Activated CD4-positive, alpha-beta T cell treated with anti-CD3 and anti-CD28 coated beads, Interleukin-2, amount 10 ng/mL, durations not matched to agents 24 days and 14 days (primary cell): ENCODE measurements at regions of chr10 and their contacts with region 1.

Region 1: GRCh38 chr10:88791924-88792323 is 10.6 kb upstream of the LIPM start:
- DNase-seq: no peak
- H3K4me3 Mint-ChIP-seq: no peak overlapping the region
- H3K27ac Mint-ChIP-seq: no peak overlapping the region
- H3K4me1 Mint-ChIP-seq: peaks cover 24% of the 10 kb centered on the region
- H3K27me3 Mint-ChIP-seq: peaks cover 21% of the 10 kb centered on the region

Region 2: DNA sequence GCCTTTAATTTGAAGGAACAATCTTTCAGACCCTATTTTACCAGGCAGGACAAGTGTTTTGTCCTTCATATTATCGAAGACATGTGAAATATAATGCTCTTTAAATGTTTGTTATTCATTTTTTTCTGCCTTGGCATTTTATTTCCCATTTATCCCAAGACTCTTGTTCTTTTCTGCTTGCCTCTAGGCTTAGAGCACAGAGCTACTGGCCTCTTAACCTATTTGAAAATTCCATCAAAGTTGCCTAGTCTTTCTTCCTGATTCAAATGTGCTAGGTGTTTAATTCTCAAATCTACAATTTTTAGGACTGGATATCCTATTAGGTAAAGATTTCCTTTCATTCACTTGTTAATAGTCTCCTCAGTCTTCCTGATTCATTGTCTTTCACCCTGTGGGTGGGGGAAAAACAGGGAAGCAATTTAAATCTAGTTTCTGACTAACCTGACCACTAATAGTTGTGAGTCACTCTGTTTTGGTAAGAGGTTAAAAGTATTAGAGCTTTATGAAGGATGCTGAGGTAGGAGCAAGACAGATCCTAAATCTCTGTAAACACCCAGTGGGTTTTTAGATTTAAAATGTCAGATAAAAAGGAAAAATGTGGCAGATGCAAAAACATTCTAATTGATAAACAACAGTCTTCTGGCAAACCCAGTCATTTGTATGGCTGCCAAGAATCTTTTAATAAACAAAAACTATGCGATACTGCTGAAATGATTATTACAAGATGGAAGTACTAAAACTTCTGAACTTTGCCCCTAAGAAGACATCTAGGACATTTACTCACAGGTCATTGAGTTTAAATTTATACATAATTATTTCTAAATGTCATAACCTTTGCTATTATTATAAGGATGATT is 84.3 kb before region 1 on chr10:
- intact Hi-C with region 1: loop called (anchors 5 kb)
- DNase-seq: no peak
- H3K4me3 Mint-ChIP-seq: no peak overlapping the region
- H3K27ac Mint-ChIP-seq: peak overlapping the region; percentile 1
- H3K4me1 Mint-ChIP-seq: peaks cover 15% of the 10 kb centered on the region
- H3K27me3 Mint-ChIP-seq: peaks cover 28% of the 10 kb centered on the region

Region 3: DNA sequence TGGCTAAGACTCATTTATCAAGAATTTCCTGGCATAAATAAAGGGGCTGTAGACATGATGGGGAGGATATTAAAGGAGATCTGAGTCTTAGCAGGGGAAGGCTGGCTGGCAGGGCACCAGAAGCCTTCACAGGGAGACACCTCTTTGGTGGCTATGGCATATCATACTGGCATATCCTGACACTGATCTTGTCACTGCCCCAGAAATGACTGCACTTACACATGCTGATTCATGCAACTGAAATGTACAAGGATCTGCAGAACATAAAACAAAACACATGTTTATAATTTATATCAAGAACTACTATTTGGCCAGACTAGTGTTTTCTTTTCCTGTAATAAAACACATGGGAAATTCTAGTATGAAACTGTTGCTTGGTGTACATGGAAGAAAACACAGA is 37.6 kb before region 1 on chr10:
- intact Hi-C with region 1: loop called (anchors 2 kb)
- DNase-seq: no peak
- H3K4me3 Mint-ChIP-seq: no peak overlapping the region
- H3K27ac Mint-ChIP-seq: no peak overlapping the region
- H3K4me1 Mint-ChIP-seq: peaks cover 5% of the 10 kb centered on the region
- H3K27me3 Mint-ChIP-seq: peaks cover 23% of the 10 kb centered on the region

Region 4: DNA sequence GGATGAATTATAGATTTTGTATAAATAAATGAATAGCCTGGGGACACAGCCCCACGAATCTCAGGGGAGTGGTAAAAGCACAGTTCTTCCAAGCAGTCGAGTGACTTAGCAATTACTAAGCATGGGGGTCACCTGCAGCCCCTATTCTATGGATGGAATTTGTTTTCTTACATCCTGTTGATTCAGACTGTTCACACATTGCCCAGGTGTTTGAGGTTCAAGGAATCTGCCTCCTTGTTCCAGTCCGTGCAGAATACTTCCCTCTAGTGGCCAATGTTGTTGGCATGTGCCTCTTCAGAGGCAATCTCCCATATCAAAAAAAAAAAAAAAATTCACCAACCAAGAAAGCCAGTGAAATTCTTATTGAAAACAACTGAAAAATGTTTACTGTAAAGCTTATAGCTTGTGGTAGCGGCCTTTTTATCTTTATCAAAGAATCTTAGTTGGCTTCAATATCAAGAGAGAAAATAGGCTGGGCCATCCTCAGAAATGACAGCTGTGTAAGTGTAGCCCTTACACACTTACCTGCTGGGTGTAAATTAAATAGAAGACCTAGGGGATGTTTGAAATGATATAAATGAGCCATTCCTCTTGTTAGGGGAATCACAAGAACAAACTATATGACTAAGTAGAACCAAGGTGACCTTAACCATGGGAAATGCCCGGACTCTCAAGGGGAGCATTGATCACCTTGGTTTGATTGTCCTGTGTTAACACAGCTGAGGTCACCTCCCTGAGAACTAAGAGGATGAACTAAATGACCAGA is 18.5 kb after region 1 on chr10:
- intact Hi-C with region 1: no loop called
- DNase-seq: peak; percentile 80
- H3K4me3 Mint-ChIP-seq: no peak overlapping the region
- H3K27ac Mint-ChIP-seq: no peak overlapping the region
- H3K4me1 Mint-ChIP-seq: peaks cover 18% of the 10 kb centered on the region
- H3K27me3 Mint-ChIP-seq: peaks cover 27% of the 10 kb centered on the region

Region 5: GRCh38 chr10:88820748-88821389 is 28.9 kb after region 1 on chr10:
- intact Hi-C with region 1: loop called (anchors 1 kb)
- DNase-seq: no peak
- H3K4me3 Mint-ChIP-seq: no peak overlapping the region
- H3K27ac Mint-ChIP-seq: no peak overlapping the region
- H3K4me1 Mint-ChIP-seq: peaks cover 19% of the 10 kb centered on the region
- H3K27me3 Mint-ChIP-seq: peaks cover 10% of the 10 kb centered on the region